HepG2 (cell line): ENCODE measurements at regions of chr2 and their contacts with region 1.

Region 1: GRCh38 chr2:152470861-152471854 is 136.2 kb downstream of the FMNL2 start:
- DNase-seq: peak; percentile 46
- ATAC-seq: peak; percentile 29
- H3K4me3 ChIP-seq: peak overlapping the region in 2 of 3 experiments; percentile 29 to 34; a peak in 3 of 6 replicates
- H3K27ac ChIP-seq: peak overlapping the region; percentile 57
- H3K4me1 ChIP-seq: peaks cover 98% of the 10 kb centered on the region
- H3K27me3 ChIP-seq: no peaks in the 10 kb centered on the region
- CTCF ChIP-seq: no peak
- EP300 ChIP-seq: peak in 1 of 2 experiments; percentile 42; a peak in 1 of 4 replicates
- POLR2A ChIP-seq: no peak
- RAD21 ChIP-seq: no peak

Region 2: DNA sequence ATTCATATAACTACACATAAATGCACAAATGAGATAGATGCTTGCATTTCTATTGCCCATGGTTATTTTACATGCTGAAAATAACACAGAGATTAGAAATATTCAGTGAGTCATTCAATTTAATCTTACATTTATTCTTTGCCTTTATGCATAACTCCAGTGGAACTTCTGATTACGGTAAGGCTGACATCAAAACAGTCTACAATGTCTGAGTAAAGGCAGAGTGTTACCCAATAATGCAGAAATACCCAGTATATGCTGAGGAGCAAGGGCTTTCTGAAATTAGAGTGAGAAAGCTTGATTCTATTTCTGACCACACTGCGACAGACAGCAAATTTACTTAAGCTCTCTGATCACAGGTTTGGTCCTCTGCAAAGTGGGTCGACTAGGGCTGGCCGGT is 1190.9 kb before region 1 on chr2:
- CTCF ChIA-PET with region 1: no interaction called
- POLR2A ChIA-PET with region 1: no interaction called
- in situ Hi-C with region 1: no loop called
- intact Hi-C with region 1: no loop called
- DNase-seq: no peak
- ATAC-seq: no peak
- H3K4me3 ChIP-seq: no peak overlapping the region
- H3K27ac ChIP-seq: no peak overlapping the region
- H3K4me1 ChIP-seq: no peaks in the 10 kb centered on the region
- H3K27me3 ChIP-seq: no peaks in the 10 kb centered on the region
- CTCF ChIP-seq: no peak
- EP300 ChIP-seq: no peak
- POLR2A ChIP-seq: no peak
- RAD21 ChIP-seq: no peak

Region 3: DNA sequence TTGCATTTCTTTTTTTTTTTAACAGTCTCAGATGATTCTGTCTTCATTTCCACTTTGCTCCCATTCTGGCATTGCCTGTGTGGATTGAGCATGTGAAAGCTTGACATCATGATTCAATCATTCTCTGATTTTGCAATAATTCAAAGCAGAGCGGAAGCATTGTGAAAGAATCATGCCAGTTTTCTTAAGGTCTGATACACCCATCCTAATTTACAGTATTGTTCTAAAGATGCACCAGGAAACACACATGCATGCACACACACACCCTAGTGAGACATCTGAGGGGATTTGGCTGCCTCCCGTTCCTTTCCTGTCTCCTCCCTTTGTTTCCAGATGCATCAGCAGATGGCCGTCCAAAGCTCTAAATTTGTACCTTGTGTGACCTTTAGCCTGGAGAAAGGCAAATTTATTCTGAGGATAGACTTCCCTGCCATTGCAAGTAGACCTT is 38.9 kb before region 1 on chr2:
- CTCF ChIA-PET with region 1: no interaction called
- POLR2A ChIA-PET with region 1: no interaction called
- in situ Hi-C with region 1: no loop called
- intact Hi-C with region 1: loop called (anchors 5 kb)
- DNase-seq: peak; percentile 42
- ATAC-seq: peak; percentile 43
- H3K4me3 ChIP-seq: no peak overlapping the region
- H3K27ac ChIP-seq: peak overlapping the region; percentile 51
- H3K4me1 ChIP-seq: peaks cover 70% of the 10 kb centered on the region
- H3K27me3 ChIP-seq: no peaks in the 10 kb centered on the region
- CTCF ChIP-seq: no peak
- EP300 ChIP-seq: no peak
- POLR2A ChIP-seq: no peak
- RAD21 ChIP-seq: no peak

Region 4: GRCh38 chr2:152493417-152493816 is 22.3 kb after region 1 on chr2:
- CTCF ChIA-PET with region 1: no interaction called
- POLR2A ChIA-PET with region 1: no interaction called
- in situ Hi-C with region 1: no loop called
- intact Hi-C with region 1: no loop called
- DNase-seq: no peak
- ATAC-seq: no peak
- H3K4me3 ChIP-seq: no peak overlapping the region
- H3K27ac ChIP-seq: no peak overlapping the region
- H3K4me1 ChIP-seq: peaks cover 72% of the 10 kb centered on the region
- H3K27me3 ChIP-seq: no peaks in the 10 kb centered on the region
- CTCF ChIP-seq: no peak
- EP300 ChIP-seq: no peak
- POLR2A ChIP-seq: no peak
- RAD21 ChIP-seq: no peak

Region 5: DNA sequence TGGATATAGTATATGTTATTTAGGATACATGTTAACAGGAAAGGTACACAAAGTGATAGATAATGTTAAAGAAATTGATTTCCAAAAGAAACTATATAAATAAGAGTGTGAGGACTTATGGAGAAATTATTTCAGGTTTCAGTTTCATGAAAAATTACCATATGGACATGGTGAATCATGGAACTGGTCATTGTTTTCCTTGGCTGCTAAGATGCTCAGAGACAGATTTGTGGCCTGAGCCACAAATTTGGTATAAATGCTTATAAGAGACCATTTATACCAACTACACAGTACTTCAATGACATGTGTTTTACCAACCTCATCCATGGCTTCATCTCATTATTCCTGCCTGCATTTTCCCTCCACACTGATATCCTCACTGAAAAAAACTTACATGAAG is 51.9 kb after region 1 on chr2:
- CTCF ChIA-PET with region 1: no interaction called
- POLR2A ChIA-PET with region 1: no interaction called
- in situ Hi-C with region 1: no loop called
- intact Hi-C with region 1: no loop called
- DNase-seq: no peak
- ATAC-seq: no peak
- H3K4me3 ChIP-seq: no peak overlapping the region
- H3K27ac ChIP-seq: no peak overlapping the region
- H3K4me1 ChIP-seq: peaks cover 19% of the 10 kb centered on the region
- H3K27me3 ChIP-seq: no peaks in the 10 kb centered on the region
- CTCF ChIP-seq: no peak
- EP300 ChIP-seq: no peak
- POLR2A ChIP-seq: no peak
- RAD21 ChIP-seq: no peak

Region 6: GRCh38 chr2:153235516-153235915 is 764.4 kb after region 1 on chr2:
- CTCF ChIA-PET with region 1: no interaction called
- POLR2A ChIA-PET with region 1: no interaction called
- in situ Hi-C with region 1: no loop called
- intact Hi-C with region 1: no loop called
- DNase-seq: no peak
- ATAC-seq: no peak
- H3K4me3 ChIP-seq: no peak overlapping the region
- H3K27ac ChIP-seq: no peak overlapping the region
- H3K4me1 ChIP-seq: no peaks in the 10 kb centered on the region
- H3K27me3 ChIP-seq: no peaks in the 10 kb centered on the region
- CTCF ChIP-seq: no peak
- EP300 ChIP-seq: no peak
- POLR2A ChIP-seq: no peak
- RAD21 ChIP-seq: no peak